ENCODE measurements at regions of chr4 and their contacts with region 1.

Region 1: GRCh38 chr4:94406668-94407437 is 44.9 kb upstream of the PDLIM5 start:
- DNase-seq: peak; percentile 67
- H3K4me3 ChIP-seq: no peak overlapping the region
- H3K27ac ChIP-seq: no peak overlapping the region
- H3K27me3 ChIP-seq: no peaks in the 10 kb centered on the region
- CTCF ChIP-seq: peak; percentile 93

Region 2: GRCh38 chr4:94304365-94304971 is 102.4 kb before region 1 on chr4:
- CTCF ChIA-PET with region 1: interaction called, 11 read pairs
- POLR2A ChIA-PET with region 1: no interaction called
- DNase-seq: no peak
- H3K4me3 ChIP-seq: no peak overlapping the region
- H3K27ac ChIP-seq: no peak overlapping the region
- H3K27me3 ChIP-seq: no peaks in the 10 kb centered on the region
- CTCF ChIP-seq: peak; percentile 68

Region 3: GRCh38 chr4:94419956-94420355 is 13.1 kb after region 1 on chr4:
- CTCF ChIA-PET with region 1: interaction called, 17 read pairs
- POLR2A ChIA-PET with region 1: no interaction called
- DNase-seq: no peak
- H3K4me3 ChIP-seq: no peak overlapping the region
- H3K27ac ChIP-seq: no peak overlapping the region
- H3K27me3 ChIP-seq: no peaks in the 10 kb centered on the region
- CTCF ChIP-seq: no peak

Region 4: GRCh38 chr4:94583914-94584641 is 177.2 kb after region 1 on chr4:
- CTCF ChIA-PET with region 1: interaction called, 22 read pairs
- POLR2A ChIA-PET with region 1: no interaction called
- DNase-seq: no peak
- H3K4me3 ChIP-seq: no peak overlapping the region
- H3K27ac ChIP-seq: no peak overlapping the region
- H3K27me3 ChIP-seq: no peaks in the 10 kb centered on the region
- CTCF ChIP-seq: no peak

Region 5: GRCh38 chr4:94605241-94605805 is 198.5 kb after region 1 on chr4:
- CTCF ChIA-PET with region 1: interaction called, 23 read pairs
- POLR2A ChIA-PET with region 1: no interaction called
- DNase-seq: no peak
- H3K4me3 ChIP-seq: no peak overlapping the region
- H3K27ac ChIP-seq: no peak overlapping the region
- H3K27me3 ChIP-seq: no peaks in the 10 kb centered on the region
- CTCF ChIP-seq: no peak

Region 6: GRCh38 chr4:95124906-95125504 is 718.2 kb after region 1 on chr4:
- CTCF ChIA-PET with region 1: interaction called, 17 read pairs
- POLR2A ChIA-PET with region 1: no interaction called
- DNase-seq: peak; percentile 39
- H3K4me3 ChIP-seq: no peak overlapping the region
- H3K27ac ChIP-seq: no peak overlapping the region
- H3K27me3 ChIP-seq: no peaks in the 10 kb centered on the region
- CTCF ChIP-seq: peak; percentile 76